Lower leg skin (tissue), 4 donors: ENCODE measurements at regions of chr1 and their contacts with region 1.

Region 1: DNA sequence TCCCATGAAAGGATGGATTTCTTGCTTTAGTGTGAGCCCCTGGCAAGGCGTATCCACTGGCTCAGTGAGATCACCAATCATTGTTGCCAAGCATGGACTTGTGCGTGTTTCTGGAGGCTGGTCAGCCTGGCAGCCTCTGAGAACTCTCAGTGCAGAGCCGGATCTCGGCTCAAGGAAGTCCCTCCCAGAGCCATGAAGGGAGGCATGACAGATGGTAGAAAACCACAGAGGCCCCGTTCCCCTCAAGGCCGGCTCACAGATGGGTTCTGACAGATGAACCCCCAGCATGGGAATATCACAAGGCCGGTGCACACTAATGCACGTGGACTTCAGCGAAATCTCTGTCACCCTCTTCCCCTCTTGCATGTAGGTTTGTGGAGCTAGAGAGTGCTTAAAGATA is 290.5 kb downstream of the AJAP1 start:
- DNase-seq: peak in 1 of 2 donors; percentile 68
- H3K4me3 ChIP-seq: no peak overlapping the region
- CTCF ChIP-seq: no peak
- POLR2A ChIP-seq: no peak

Region 2: GRCh38 chr1:3004285-3005205 is 1940.4 kb before region 1 on chr1:
- intact Hi-C with region 1: loop called (anchors 5 kb)
- DNase-seq: peak in 1 of 2 donors; percentile 83
- H3K4me3 ChIP-seq: no peak overlapping the region
- CTCF ChIP-seq: no peak
- POLR2A ChIP-seq: no peak

Region 3: DNA sequence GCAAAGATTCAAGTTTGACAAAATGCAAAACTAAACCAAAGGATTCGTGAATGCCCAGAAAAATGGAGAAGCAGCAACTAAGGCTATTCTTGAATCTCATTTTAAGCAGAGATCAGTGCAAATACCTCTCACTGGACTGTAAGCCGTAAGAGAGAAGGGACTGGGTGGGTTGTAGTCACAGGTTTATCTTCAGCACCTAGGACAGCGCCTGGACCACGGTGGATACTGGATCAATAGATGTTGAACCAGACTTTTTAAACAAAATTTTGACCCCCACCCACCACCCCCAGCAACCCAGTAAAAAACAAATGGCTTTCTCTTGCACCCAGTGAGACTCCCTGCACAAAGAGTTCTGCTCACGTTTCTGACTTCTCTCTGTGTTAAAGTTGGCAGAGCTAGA is 56.6 kb after region 1 on chr1:
- intact Hi-C with region 1: no loop called
- DNase-seq: no peak
- H3K4me3 ChIP-seq: no peak overlapping the region
- CTCF ChIP-seq: no peak
- POLR2A ChIP-seq: no peak

Region 4: GRCh38 chr1:5239911-5240310 is 295.0 kb after region 1 on chr1:
- intact Hi-C with region 1: no loop called
- DNase-seq: peak in 1 of 2 donors; percentile 50
- H3K4me3 ChIP-seq: no peak overlapping the region
- CTCF ChIP-seq: no peak
- POLR2A ChIP-seq: no peak